Sciatic nerve (tissue), 2 donors: ENCODE measurements at regions of chr4 and their contacts with region 1.

Region 1: GRCh38 chr4:168474660-168475320 is 5.5 kb downstream of the DDX60L start:
- DNase-seq: no peak
- ATAC-seq: no peak

Region 2: GRCh38 chr4:168397611-168398169 is 77.1 kb before region 1 on chr4:
- intact Hi-C with region 1: loop called (anchors 2 kb)
- DNase-seq: no peak
- ATAC-seq: no peak

Region 3: GRCh38 chr4:169458575-169458974 is 983.8 kb after region 1 on chr4:
- intact Hi-C with region 1: no loop called
- DNase-seq: no peak
- ATAC-seq: no peak